ENCODE measurements at regions of chr5 and their contacts with region 1.

Region 1: DNA sequence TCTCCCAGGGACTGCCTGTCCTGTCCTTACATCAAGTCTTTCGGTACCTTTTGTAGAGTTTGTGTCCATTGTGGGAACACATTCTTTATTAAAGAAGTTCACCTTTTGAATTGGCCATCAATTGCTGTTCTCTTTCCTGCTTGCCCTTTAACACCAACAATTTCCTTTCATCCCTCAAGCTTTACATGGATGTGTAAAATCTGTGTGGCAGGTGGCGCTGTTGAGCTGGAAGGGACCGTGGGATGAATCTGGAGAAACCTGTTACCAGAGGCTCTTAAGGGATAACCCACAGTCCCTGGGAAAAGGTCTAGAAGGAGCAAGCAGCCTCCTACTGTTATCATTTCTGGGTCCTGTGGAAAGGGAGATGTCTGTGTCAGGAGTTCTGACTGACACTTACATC is 7.9 kb upstream of the ZFP62 start:
- DNase-seq: peak; percentile 78 to 84
- ATAC-seq: peak in 7 of 8 donors; percentile 55 to 90 (median 80)
- H3K4me3 ChIP-seq: no peak overlapping the region
- H3K27ac ChIP-seq: no peak overlapping the region
- H3K4me1 ChIP-seq: peaks cover 0 to 14% (median 4%) of the 10 kb centered on the region in 9 donors
- H3K27me3 ChIP-seq: peaks cover 0 to 11% (median 0%) of the 10 kb centered on the region in 7 donors
- CTCF ChIP-seq: peak; percentile 57 to 81 (median 77)

Region 2: GRCh38 chr5:180233729-180234128 is 635.2 kb before region 1 on chr5:
- intact Hi-C with region 1: no loop called
- DNase-seq: no peak
- ATAC-seq: no peak
- H3K4me3 ChIP-seq: no peak overlapping the region
- H3K27ac ChIP-seq: no peak overlapping the region
- H3K4me1 ChIP-seq: no peaks in the 10 kb centered on the region
- H3K27me3 ChIP-seq: no peaks in the 10 kb centered on the region
- CTCF ChIP-seq: no peak

Region 3: GRCh38 chr5:181037365-181037861 is 168.5 kb after region 1 on chr5:
- intact Hi-C with region 1: loop called in 4 of 10 experiments (anchors 5 kb)
- DNase-seq: peak; percentile 40
- ATAC-seq: peak; percentile 46 to 82 (median 78)
- H3K4me3 ChIP-seq: peak overlapping the region in 2 of 10 donors; percentile 14 to 37
- H3K27ac ChIP-seq: peak overlapping the region in 4 of 10 donors; percentile 39 to 92 (median 63)
- H3K4me1 ChIP-seq: peaks cover 0 to 27% (median 0%) of the 10 kb centered on the region in 9 donors
- H3K27me3 ChIP-seq: peaks cover 0 to 44% (median 4%) of the 10 kb centered on the region in 7 donors
- CTCF ChIP-seq: peak in 2 of 9 donors; percentile 14 to 16

Region 4: DNA sequence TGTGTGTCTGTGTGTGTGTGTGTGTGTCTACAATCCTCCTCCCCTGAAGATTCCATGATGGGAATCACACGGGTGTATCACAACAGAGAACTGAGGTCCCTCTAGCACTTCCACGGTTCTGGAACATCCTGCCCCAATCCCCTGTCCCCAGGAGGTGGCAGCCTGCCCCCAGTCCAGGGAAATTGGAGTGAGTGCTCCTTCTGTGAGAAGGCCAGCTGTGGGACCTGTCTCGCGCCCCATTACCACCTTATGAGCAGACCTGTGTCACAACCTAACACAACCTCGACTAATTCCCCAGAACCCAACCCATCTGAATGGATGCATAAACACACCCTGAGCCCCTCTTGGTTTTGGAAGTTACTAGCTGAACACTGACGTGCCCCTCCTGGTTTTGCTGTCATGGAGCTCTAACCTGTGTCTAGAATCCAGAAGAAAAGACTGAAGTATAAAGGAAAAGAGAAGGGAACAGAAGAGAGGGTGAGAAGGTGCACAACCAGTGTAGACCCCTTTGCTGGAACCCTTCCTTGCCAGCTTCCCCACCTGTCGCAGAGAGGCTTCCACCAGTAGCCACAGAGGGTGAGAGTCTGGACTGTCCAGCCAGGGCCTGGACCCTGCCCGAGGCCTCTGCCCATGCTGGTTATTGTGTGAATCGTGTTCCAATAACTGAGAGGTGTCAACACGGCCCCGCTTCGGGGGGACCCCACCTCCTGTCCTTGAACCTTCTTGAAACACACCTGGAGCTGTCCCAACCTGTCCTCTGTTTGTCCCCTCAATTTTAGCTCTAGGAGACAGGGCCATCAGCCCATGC is 174.5 kb after region 1 on chr5:
- intact Hi-C with region 1: loop called in 4 of 10 experiments (anchors 5 kb)
- DNase-seq: no peak
- ATAC-seq: peak in 7 of 8 donors; percentile 35 to 60 (median 45)
- H3K4me3 ChIP-seq: peak overlapping the region in 9 of 10 donors; percentile 4 to 62 (median 48)
- H3K27ac ChIP-seq: peak overlapping the region; percentile 14 to 93 (median 86)
- H3K4me1 ChIP-seq: peaks cover 0 to 24% (median 4%) of the 10 kb centered on the region in 9 donors
- H3K27me3 ChIP-seq: peaks cover 0 to 46% (median 33%) of the 10 kb centered on the region in 7 donors
- CTCF ChIP-seq: peak in 5 of 9 donors; percentile 24 to 47 (median 33)

Region 5: DNA sequence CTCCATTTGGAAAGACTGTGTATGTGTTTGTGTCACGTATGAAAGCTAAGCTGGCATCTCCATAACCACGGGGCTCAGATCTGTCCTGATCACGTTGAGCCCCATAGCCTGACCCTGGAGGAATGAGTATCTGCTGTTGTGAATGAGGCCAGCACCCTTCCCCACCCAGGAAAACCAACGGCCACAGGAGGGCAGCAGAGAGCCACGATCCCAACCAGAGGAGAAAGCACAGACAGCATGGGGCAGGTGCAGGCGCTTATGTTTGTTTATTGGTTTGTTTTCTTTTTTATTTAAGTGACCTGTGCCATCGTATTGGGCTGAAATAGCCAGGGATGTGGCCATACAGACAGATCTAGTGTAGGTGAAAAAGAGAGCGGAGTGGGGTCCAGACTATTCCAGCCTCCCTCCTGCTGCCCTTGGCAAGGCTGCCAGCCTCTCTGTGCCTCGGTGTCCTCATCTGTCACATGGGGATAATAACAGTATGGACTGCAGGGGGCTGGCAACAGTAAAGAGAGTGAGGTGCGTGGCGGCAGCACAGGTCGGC is 290.4 kb after region 1 on chr5:
- intact Hi-C with region 1: loop called in 5 of 10 experiments (anchors 5 to 10 kb)
- DNase-seq: peak; percentile 82 to 88
- ATAC-seq: peak; percentile 85 to 96 (median 90)
- H3K4me3 ChIP-seq: no peak overlapping the region
- H3K27ac ChIP-seq: no peak overlapping the region
- H3K4me1 ChIP-seq: peaks cover 0 to 15% (median 5%) of the 10 kb centered on the region in 9 donors
- H3K27me3 ChIP-seq: peaks cover 0 to 41% (median 6%) of the 10 kb centered on the region in 7 donors
- CTCF ChIP-seq: peak; percentile 69 to 93 (median 87)